Right cardiac atrium (tissue), 5 donors: ENCODE measurements at regions of chr1 and their contacts with region 1.

Region 1: DNA sequence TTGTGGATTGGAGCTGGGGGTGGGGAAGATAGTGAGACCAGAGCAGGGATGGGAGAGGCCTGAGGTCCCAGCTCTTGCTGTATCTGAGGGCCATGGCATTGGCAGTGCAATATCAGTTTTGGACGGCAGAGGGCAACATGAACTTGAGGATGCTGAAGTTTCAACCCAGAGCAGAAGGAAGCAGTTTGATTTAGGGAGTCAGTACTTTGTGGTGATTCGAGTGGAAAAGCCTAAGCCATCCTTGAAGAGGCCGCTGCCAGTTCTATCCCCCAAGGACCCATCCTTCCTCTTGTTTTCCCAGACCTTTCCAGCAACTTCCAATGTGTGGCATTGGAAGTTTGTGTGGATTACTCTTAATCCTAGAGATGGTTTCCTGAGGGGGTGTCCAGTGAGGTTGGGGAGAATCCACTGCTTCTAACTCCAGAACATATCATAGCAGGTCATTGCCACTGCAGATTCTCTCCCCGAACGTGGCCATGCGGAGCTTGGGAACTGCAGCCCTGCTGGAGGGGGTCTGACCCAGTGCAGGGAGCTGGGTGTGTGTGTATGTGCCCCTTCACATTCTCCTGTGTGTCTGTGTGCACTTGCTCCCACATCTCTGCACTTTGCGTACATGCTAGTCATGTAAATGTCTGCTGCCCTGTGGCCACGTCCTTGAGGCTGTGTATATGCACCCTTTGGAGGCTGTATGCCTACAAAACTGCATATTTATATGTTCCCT is 24.1 kb downstream of the SLC26A9 start:
- DNase-seq: peak; percentile 76 to 92 (median 88)
- ATAC-seq: peak; percentile 52 to 65
- H3K4me3 ChIP-seq: no peak overlapping the region
- H3K27ac ChIP-seq: peak overlapping the region; percentile 97
- H3K4me1 ChIP-seq: peaks cover 13% of the 10 kb centered on the region
- H3K27me3 ChIP-seq: no peaks in the 10 kb centered on the region

Region 2: DNA sequence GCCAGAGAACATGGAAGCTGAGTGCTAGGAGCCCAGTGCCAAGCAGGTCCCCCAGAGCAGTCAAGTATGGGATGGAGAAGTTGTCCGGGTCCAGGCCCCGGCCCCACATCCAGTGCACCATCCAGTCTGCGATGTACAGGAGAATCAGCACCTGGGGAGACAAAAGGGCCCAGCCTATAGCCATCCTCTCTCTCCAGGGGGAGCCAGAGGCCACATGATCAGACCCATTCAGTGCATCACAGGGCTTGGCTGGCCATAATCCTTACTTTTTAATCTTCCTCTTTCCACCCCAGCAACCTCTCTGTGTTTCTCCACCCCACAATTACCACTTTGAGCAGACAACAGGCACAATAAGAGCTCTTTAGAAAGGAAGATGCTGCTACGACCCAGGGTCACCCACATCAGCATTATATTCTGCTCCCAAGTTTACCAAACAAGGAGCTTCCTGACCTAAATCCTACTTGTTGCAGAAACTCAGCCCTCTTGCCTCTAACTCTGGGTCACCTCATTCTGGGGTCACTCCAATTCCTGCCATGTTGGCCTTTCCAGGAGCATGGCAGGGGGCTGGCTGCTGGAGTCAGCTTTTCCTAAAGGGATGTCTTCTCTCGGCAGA is 127.5 kb before region 1 on chr1:
- intact Hi-C with region 1: loop called in 3 of 4 experiments (anchors 5 to 10 kb)
- DNase-seq: peak; percentile 52 to 85 (median 76)
- ATAC-seq: peak; percentile 69 to 73
- H3K4me3 ChIP-seq: no peak overlapping the region
- H3K27ac ChIP-seq: no peak overlapping the region
- H3K4me1 ChIP-seq: no peaks in the 10 kb centered on the region
- H3K27me3 ChIP-seq: no peaks in the 10 kb centered on the region

Region 3: DNA sequence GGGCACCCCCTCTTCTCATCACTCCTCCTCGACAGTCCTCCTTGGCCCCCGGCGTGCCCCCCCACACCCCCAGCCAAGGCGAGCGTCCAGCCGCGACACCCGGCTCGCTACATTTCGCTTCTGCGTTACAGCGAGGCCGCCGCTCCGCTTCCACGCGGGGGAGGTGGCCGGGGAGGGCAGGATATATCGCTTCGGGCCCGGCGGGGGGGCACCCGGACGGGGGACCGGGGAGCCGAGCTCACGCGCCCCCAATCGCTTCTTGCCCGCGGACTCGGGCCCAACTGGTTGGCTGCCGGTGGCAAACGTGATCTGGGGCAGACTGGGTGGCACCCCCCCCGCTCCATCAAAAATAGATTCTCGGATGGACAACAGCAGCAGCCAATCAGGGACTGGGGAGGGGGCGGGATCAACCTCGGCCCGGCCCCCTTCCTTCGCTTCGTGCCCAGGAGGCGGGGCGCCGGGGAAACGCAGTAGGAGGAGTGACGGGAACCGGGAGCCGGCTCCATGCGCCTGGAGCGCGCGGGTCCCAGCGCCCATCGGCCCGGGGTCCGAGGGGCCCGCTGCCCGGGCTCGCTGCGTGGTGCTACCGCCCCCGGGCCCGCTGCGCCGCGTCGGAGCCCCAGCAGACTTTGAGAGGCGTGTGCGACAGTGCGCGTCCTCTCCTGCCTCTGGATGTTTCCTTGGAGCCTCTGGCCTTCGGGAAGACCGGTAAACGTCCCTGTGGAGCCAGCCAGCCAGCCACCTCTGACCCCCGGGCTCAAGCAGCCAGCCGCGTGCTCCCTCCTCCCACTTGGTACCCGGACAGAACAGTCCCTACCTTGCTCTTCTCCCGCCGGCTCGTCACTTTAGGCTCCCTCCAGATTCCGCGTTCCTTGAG is 106.1 kb before region 1 on chr1 and contains the start of gene SLC41A1:
- intact Hi-C with region 1: loop called in 3 of 4 experiments (anchors 5 to 10 kb)
- DNase-seq: peak; percentile 92 to 97 (median 96)
- ATAC-seq: peak; percentile 95
- H3K4me3 ChIP-seq: peak within 1 kb of the TSS; percentile 79
- H3K27ac ChIP-seq: peak within 1 kb of the TSS; percentile 63
- H3K4me1 ChIP-seq: peaks cover 8% of the 10 kb centered on the region
- H3K27me3 ChIP-seq: no peaks in the 10 kb centered on the region
- total RNA-seq, gene SLC41A1: 235 to 420 (median 330) TPM

Region 4: GRCh38 chr1:205961405-205961804 is 42.2 kb after region 1 on chr1:
- intact Hi-C with region 1: loop called in 1 of 4 experiments (anchors 5 kb)
- DNase-seq: peak in 2 of 3 donors; percentile 38 to 48
- ATAC-seq: peak; percentile 36 to 64
- H3K4me3 ChIP-seq: no peak overlapping the region
- H3K27ac ChIP-seq: no peak overlapping the region
- H3K4me1 ChIP-seq: peaks cover 17% of the 10 kb centered on the region
- H3K27me3 ChIP-seq: no peaks in the 10 kb centered on the region

Region 5: GRCh38 chr1:205977402-205978014 is 58.3 kb after region 1 on chr1:
- intact Hi-C with region 1: loop called (anchors 1 to 5 kb)
- DNase-seq: peak; percentile 65 to 89 (median 81)
- ATAC-seq: peak; percentile 76 to 78
- H3K4me3 ChIP-seq: no peak overlapping the region
- H3K27ac ChIP-seq: peak overlapping the region; percentile 93
- H3K4me1 ChIP-seq: peaks cover 4% of the 10 kb centered on the region
- H3K27me3 ChIP-seq: no peaks in the 10 kb centered on the region

Region 6: DNA sequence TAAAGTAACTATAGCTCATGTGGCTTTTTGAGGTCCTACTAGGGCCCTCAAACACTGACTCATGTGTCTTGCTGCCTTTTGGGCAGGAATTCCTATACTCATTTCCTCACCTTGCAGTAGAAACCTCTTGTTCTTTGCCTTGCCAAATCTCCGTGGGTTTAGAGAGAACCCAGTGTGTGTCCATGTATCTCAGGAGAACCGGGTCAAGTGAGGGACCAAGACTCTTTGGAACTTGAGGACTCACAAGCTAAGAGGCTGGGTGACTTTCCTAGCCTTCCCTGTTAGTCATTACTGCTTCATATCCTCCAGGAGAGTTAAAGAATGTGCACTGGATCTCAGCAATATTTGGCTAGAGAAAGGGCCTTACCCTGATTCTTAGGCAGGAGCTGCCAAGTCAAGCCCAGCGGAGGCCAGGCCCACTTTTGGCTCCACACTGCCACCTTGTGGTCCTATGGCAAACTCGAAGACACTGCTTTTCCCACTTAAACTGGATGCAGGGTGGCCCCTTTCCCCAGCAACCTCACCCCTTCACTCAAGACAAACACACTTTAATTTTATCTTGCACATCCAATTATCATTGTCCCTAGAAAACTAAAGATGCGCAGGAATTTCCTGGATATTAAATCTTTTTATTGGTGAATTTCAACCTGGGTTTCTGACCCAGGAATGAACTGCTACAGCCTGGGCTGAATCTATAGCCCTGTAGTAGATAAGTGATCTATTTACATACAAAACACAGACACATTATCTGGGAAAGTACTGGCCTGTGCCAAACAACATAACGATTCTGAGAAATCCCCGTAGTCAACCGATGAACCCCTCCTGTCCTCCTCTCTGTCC is 187.4 kb after region 1 on chr1:
- intact Hi-C with region 1: loop called in 2 of 4 experiments (anchors 5 to 10 kb)
- DNase-seq: peak; percentile 83 to 93 (median 90)
- ATAC-seq: peak; percentile 84 to 87
- H3K4me3 ChIP-seq: no peak overlapping the region
- H3K27ac ChIP-seq: no peak overlapping the region
- H3K4me1 ChIP-seq: no peaks in the 10 kb centered on the region
- H3K27me3 ChIP-seq: no peaks in the 10 kb centered on the region